Colonic mucosa (tissue), 4 donors: ENCODE measurements at regions of chr17 and their contacts with region 1.

Region 1: GRCh38 chr17:77476931-77477877 is 336.4 kb downstream of the SEC14L1 start:
- DNase-seq: peak; percentile 45
- H3K4me3 ChIP-seq: no peak overlapping the region
- H3K27ac ChIP-seq: peak overlapping the region; percentile 55
- H3K4me1 ChIP-seq: peaks cover 22% of the 10 kb centered on the region
- H3K27me3 ChIP-seq: no peaks in the 10 kb centered on the region
- CTCF ChIP-seq: no peak

Region 2: DNA sequence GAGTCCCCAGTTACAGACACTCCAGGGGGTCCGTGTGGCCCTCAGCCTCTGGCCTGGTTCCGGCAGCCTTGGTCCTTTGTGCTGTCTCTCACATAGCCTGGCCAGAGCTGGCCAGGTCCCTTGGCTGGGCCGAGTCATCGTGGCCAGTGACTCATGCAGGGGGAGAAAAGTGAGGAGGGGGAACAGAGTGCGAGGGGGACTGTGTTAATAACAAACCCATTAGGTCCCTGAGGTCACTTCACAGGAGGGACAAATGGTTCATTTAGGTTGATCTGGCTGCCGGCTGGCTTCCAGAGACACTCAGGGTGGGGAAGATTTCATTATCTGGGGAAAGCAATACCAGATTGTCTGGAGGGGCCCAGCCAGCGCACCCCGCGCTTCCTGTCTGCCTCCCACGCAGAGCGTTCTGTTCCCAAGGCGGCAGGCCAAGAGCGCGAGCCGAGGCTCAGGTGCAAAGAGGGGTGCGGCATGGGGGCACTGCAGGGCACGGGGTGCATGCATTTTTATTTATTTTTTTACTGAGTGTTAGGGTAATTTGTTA is 113.3 kb before region 1 on chr17:
- intact Hi-C with region 1: no loop called
- DNase-seq: no peak
- H3K4me3 ChIP-seq: no peak overlapping the region
- H3K27ac ChIP-seq: no peak overlapping the region
- H3K4me1 ChIP-seq: peaks cover 12% of the 10 kb centered on the region
- H3K27me3 ChIP-seq: no peaks in the 10 kb centered on the region
- CTCF ChIP-seq: no peak

Region 3: DNA sequence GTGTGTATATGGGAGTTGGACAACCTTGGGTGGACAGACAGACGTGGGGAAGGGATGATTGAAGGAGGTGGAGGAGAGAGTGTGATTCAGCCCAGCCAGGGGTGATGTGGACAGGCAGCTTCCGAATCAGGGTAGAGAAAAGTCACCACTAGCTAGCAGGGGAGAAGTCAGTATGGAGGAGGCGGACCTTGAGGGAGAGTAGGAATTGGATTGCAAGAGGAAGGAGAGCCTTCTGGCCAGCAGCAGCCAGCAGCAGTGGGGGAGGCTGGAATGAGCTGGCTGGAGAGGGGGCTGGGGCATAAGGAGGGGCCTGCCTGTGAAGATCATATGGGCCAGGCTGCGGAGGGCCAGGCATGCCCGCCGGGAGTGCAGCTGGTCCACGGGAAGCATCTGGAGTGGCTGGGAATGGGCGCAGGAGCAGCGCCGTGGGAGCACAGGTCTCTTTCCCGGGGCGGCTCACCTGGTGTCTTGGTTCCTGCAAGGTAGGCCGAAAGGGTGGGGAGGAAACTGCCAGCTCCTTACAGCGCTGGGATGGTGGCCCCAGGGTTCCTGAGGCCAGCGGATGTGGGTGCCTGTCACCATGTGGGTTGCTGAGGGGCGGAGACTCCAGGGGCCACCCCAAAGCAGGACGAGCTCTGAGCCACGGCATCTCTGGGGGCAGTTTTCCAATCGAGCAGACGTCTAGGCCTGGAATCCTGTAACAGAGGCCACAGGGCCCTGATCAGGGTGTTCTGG is 101.1 kb before region 1 on chr17:
- intact Hi-C with region 1: no loop called
- DNase-seq: no peak
- H3K4me3 ChIP-seq: peak overlapping the region; percentile 10
- H3K27ac ChIP-seq: peak overlapping the region; percentile 87
- H3K4me1 ChIP-seq: peaks cover 20% of the 10 kb centered on the region
- H3K27me3 ChIP-seq: no peaks in the 10 kb centered on the region
- CTCF ChIP-seq: no peak

Region 4: GRCh38 chr17:77444984-77445759 is 32.0 kb before region 1 on chr17:
- intact Hi-C with region 1: loop called (anchors 5 kb)
- DNase-seq: peak; percentile 71
- H3K4me3 ChIP-seq: no peak overlapping the region
- H3K27ac ChIP-seq: peak overlapping the region; percentile 83
- H3K4me1 ChIP-seq: peaks cover 30% of the 10 kb centered on the region
- H3K27me3 ChIP-seq: no peaks in the 10 kb centered on the region
- CTCF ChIP-seq: no peak

Region 5: DNA sequence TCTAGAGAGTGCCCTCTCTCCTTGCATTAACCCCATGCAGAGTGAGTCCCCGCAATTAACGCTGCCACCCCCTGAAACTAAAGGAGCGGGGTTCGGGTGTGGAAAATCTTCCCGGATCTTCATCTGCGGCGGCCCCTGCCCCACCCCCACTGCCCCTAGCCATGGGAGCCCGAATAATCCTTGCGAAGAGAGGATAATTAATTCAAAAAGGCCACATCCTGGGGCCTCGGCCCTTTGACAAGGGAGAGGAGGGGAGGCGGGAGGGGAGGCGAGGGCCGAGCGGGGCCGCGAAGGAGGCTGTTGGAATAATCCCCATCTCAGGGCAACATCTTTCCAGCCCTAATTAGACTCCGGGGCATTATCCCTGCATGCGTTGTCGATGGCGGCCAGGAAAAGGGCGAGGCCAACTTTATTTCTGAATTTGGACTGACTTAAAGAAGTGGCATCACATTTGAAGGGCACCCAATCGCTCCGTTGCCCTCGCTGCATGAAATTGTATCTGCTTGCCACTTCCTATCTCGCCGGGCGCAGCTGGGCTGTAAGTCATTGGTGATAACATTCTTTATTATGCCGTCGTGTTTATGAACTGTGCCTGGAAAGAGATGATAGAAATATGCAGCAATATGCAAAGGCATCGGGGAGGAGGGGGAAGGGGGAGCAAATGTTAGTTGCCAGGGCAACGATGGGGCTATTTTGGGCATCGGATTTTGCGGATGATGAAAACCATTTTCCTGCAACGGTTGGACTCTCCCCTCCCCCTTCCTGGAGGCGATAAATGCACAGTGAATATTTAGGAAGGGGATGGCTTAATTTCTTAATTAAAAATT is 94.2 kb after region 1 on chr17:
- intact Hi-C with region 1: no loop called
- DNase-seq: no peak
- H3K4me3 ChIP-seq: no peak overlapping the region
- H3K27ac ChIP-seq: no peak overlapping the region
- H3K4me1 ChIP-seq: no peaks in the 10 kb centered on the region
- H3K27me3 ChIP-seq: peaks cover 13% of the 10 kb centered on the region
- CTCF ChIP-seq: no peak

Region 6: GRCh38 chr17:77677211-77677610 is 200.0 kb after region 1 on chr17:
- intact Hi-C with region 1: no loop called
- DNase-seq: no peak
- H3K4me3 ChIP-seq: no peak overlapping the region
- H3K27ac ChIP-seq: no peak overlapping the region
- H3K4me1 ChIP-seq: no peaks in the 10 kb centered on the region
- H3K27me3 ChIP-seq: no peaks in the 10 kb centered on the region
- CTCF ChIP-seq: no peak